ENCODE measurements at regions of chr3 and their contacts with region 1.

Region 1: DNA sequence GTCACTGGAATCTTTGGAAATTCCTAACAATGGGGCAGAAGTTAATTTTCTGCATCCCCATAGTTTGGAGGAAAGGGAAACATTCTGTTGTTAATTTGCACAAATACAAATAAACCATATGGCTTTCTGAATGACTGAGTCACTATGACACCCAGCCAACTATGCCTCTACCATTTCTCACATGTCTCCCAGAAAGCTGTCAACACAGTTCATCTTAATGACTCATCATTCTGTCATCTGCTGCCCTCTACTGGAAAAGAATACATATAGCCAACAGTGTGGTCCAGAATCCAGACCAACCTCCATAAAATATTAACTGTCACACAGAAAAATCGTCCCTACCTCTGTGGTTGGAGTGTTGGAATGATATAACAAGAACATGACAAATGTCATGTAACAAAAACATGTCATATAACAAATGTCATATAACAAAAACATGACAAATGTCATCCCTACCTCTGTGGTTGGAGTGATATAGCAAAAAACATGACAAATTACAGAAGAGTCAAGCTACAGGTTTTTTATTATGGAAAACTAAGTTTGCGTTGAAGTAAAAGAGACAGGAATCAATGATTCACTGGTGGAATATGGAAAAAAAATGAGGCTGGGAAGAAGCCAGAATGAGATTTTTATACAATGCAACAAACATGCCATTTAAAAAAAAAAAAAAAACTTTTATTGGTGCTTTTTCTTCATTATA is 47.7 kb upstream of the GYG1 start:
- DNase-seq: no peak

Region 2: GRCh38 chr3:148372206-148372875 is 571.3 kb before region 1 on chr3:
- intact Hi-C with region 1: loop called (anchors 5 kb)
- DNase-seq: no peak

Region 3: DNA sequence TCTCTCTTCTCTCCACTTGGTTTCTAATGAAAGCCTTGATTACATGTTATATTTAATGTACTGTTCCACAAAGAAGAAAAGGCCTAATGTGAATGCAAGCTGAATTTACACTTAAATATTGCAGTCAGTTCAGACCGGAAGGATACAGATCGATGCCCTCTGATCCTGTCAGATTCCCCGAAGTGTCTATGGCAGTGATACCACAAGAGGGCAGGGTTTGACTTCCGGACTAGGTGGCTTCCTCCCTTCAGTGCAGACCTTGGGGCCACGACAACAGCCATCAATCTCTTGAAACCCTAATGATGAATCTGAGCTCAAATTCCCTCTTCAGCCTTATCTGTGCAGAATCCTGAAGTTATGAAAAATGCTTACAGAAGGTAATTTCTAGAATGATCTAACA is 216.4 kb before region 1 on chr3:
- intact Hi-C with region 1: loop called (anchors 1 kb)
- DNase-seq: peak; percentile 24 to 93 (median 66)

Region 4: GRCh38 chr3:148861277-148861869 is 82.3 kb before region 1 on chr3:
- intact Hi-C with region 1: loop called (anchors 1 kb)
- DNase-seq: no peak